AG04449 (cell line): ENCODE measurements at regions of chr14 and their contacts with region 1.

Region 1: DNA sequence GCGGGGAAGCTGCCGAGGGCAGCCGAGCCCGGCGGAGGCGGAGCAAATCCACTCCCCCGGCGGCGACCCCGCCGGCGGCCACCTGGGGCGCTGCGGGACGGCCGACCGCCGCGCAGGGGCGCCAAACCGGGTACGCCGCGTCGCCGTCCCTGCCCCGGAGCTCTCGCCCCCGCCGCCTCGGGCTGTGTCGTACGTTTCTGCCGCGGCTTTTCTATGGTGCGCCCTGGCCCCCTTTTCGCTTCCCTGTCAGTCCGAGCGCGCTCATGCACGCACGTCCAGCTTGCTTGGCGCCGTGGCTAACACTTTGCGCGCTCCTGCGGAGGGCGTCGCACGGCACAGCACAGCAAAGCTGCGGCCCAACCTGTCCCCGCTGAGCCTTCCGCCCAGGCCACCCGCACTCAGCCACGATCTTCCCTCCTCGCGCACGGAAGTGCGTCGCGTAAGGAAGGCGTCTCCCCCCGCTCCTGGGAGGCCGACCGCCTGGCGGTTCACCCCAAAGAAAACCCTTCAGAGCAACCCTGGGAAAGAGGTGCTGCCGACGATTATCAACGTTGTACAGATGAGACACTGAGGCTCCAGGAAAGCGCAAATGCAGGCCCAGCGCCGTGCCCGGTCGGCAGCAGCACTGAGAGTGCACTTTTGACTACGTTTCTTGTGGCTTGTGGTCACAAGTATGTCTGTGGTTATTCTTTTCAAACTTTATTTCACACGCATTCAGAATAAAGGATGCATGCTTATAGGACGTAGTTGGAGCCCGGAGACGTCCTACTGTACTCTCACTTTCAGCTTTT is at the start of gene HECTD1:
- DNase-seq: peak; percentile 56
- H3K4me3 ChIP-seq: peak within 1 kb of the TSS; percentile 71
- CTCF ChIP-seq: peak; percentile 44

Region 2: DNA sequence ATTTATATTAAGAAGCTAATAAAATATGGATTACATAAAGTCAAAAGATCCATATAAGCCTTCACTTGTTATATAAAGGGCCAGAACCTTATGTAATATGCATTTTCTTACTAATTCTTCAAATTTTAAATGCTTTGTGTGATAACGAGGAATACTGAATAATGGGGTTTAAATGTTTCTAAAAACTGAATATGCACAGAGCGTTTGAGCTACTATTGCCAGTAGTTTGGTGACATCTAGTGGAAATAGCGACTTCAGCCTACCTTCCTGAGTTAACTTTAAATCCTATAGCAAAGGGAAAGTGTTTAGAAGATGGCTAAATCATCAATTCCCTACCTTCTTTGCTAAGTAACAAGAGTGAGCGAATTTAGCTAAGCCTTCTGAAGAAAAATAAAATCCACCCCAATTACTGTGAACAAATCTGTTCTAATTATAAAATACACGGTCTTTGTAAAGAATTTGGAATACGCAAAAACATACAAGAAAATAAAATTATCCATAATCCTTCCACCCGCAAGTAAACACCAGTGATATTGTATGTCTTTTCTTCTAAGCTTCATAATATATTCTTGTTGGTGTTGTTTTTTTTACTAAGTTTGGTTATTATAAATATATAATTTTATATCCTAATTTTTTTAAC is 764.5 kb before region 1 on chr14:
- CTCF ChIA-PET with region 1: no interaction called
- POLR2A ChIA-PET with region 1: no interaction called
- DNase-seq: no peak
- H3K4me3 ChIP-seq: no peak overlapping the region
- CTCF ChIP-seq: peak; percentile 4

Region 3: DNA sequence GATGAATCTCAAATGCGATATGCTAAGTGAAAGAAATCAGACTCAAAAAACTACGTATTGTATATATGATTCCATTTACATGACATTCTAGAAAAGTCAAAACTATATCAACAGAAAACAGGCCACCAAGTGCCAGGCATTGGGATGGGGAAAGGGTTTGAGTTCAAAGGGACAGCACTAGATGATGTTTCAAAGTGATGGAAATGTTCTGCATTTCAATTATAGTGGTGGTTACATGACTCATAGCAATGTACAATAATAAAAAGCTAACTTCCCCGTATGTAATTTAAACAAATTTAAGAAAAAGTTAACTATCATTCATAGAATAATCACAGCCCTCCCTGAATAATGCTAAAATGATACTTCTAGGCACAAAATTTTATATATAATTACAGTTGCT is 13.9 kb before region 1 on chr14:
- CTCF ChIA-PET with region 1: interaction called, 43 read pairs
- POLR2A ChIA-PET with region 1: interaction called, 6 read pairs
- DNase-seq: no peak
- H3K4me3 ChIP-seq: no peak overlapping the region
- CTCF ChIP-seq: no peak

Region 4: GRCh38 chr14:31219169-31219568 is 11.2 kb after region 1 on chr14:
- CTCF ChIA-PET with region 1: interaction called, 31 read pairs
- POLR2A ChIA-PET with region 1: interaction called, 4 read pairs
- DNase-seq: no peak
- H3K4me3 ChIP-seq: no peak overlapping the region
- CTCF ChIP-seq: no peak

Region 5: GRCh38 chr14:31229638-31230229 is 21.8 kb after region 1 on chr14:
- CTCF ChIA-PET with region 1: interaction called, 15 read pairs
- POLR2A ChIA-PET with region 1: interaction called, 4 read pairs
- DNase-seq: peak; percentile 77
- H3K4me3 ChIP-seq: peak overlapping the region; percentile 32; the same call in 1 of the 2 replicates
- CTCF ChIP-seq: no peak

Region 6: GRCh38 chr14:31263485-31264133 is 55.7 kb after region 1 on chr14:
- CTCF ChIA-PET with region 1: interaction called, 11 read pairs
- POLR2A ChIA-PET with region 1: interaction called, 9 read pairs
- DNase-seq: peak; percentile 100
- H3K4me3 ChIP-seq: no peak overlapping the region
- CTCF ChIP-seq: no peak

Region 7: DNA sequence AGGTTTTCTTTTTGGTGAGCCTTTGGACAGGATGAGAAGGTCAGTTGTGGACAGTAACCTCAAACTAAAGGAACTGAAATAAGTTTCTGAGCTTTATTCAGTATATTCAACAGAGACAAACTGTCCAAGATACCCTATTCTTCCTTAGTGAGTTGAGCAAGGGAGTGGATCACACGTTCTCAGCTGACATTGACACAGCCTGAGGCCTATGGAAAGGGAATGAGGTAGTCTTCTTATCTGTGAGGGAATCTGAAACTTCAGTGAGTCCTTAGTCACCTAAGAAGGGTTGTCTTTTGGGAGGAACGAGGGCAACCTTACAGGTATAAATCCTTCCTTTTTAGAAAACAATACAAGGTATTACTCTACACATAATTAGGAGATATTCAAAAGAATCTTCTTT is 348.2 kb after region 1 on chr14:
- CTCF ChIA-PET with region 1: no interaction called
- POLR2A ChIA-PET with region 1: no interaction called
- DNase-seq: no peak
- H3K4me3 ChIP-seq: no peak overlapping the region
- CTCF ChIP-seq: no peak